Sigmoid colon (tissue), 7 donors: ENCODE measurements at regions of chr22 and their contacts with region 1.

Region 1: GRCh38 chr22:25777870-25778269 is 35.9 kb downstream of the MYO18B start:
- DNase-seq: no peak
- H3K4me3 ChIP-seq: no peak overlapping the region
- H3K27ac ChIP-seq: no peak overlapping the region
- H3K4me1 ChIP-seq: peaks cover 0 to 14% (median 14%) of the 10 kb centered on the region in 4 donors
- H3K27me3 ChIP-seq: no peaks in the 10 kb centered on the region
- CTCF ChIP-seq: no peak
- EP300 ChIP-seq: no peak
- POLR2A ChIP-seq: no peak

Region 2: DNA sequence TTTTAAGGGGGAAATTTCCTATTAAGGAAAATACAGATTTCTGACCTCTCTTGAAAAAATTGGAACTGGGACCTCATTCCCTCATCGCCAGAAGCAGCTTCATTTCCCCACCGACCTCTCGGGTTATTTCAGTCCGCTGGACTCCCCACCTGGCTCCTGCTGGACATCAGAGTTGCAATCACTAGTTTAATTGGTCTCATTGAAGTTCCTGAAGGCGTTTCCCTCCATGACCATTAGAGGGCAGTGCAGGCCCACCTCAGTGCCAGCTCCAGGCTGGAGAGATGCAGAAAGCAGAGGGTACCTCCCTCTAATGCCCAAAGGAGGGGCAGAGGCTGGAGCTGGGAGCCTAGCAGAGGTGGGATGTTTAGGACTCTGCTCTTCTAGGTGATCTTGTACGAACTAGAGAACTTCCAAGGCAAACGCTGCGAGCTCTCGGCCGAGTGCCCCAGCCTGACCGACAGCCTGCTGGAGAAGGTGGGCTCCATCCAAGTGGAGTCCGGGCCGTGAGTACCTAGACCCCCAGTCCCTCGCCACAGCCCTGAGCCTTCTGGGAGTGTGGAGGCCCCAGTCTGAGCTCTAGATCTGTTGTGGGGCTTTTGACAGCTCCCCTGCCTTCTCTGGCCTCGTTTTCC is 575.5 kb before region 1 on chr22:
- intact Hi-C with region 1: loop called (anchors 10 kb)
- DNase-seq: no peak
- H3K4me3 ChIP-seq: no peak overlapping the region
- H3K27ac ChIP-seq: no peak overlapping the region
- H3K4me1 ChIP-seq: no peaks in the 10 kb centered on the region
- H3K27me3 ChIP-seq: no peaks in the 10 kb centered on the region
- CTCF ChIP-seq: peak; percentile 9 to 91 (median 56)
- EP300 ChIP-seq: no peak
- POLR2A ChIP-seq: no peak

Region 3: GRCh38 chr22:25362215-25362882 is 415.5 kb before region 1 on chr22:
- intact Hi-C with region 1: loop called (anchors 5 kb)
- DNase-seq: peak; percentile 77
- H3K4me3 ChIP-seq: no peak overlapping the region
- H3K27ac ChIP-seq: no peak overlapping the region
- H3K4me1 ChIP-seq: peaks cover 0 to 15% (median 4%) of the 10 kb centered on the region in 4 donors
- H3K27me3 ChIP-seq: no peaks in the 10 kb centered on the region
- CTCF ChIP-seq: peak; percentile 49 to 87 (median 81)
- EP300 ChIP-seq: no peak
- POLR2A ChIP-seq: no peak

Region 4: GRCh38 chr22:25447686-25448434 is 330.0 kb before region 1 on chr22:
- intact Hi-C with region 1: loop called (anchors 5 kb)
- DNase-seq: peak; percentile 92
- H3K4me3 ChIP-seq: peak overlapping the region; percentile 50 to 82 (median 66)
- H3K27ac ChIP-seq: peak overlapping the region; percentile 72 to 83 (median 82)
- H3K4me1 ChIP-seq: peaks cover 0 to 31% (median 19%) of the 10 kb centered on the region in 4 donors
- H3K27me3 ChIP-seq: no peaks in the 10 kb centered on the region
- CTCF ChIP-seq: peak; percentile 85 to 94 (median 88)
- EP300 ChIP-seq: no peak
- POLR2A ChIP-seq: no peak

Region 5: DNA sequence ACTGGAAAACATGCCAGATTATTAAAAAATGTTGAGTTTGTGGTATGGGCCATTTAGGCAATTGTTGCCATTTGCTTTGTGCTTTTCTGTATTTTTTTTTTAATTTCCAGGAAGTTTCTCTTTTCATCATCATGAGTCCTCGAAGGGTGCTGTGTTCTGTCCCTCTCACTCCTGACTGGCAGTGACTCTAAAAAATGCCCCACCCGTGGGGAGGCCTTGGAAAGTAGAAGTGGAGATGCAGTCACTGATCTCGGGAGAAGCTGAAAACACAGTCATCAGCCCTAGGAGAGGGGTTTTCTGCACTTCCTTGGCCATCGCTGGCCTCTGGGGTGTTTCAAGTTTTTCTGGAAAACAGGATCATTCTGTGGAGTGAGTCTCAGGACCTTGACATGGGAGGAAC is 311.9 kb before region 1 on chr22:
- intact Hi-C with region 1: loop called (anchors 1 kb)
- DNase-seq: no peak
- H3K4me3 ChIP-seq: no peak overlapping the region
- H3K27ac ChIP-seq: no peak overlapping the region
- H3K4me1 ChIP-seq: no peaks in the 10 kb centered on the region
- H3K27me3 ChIP-seq: no peaks in the 10 kb centered on the region
- CTCF ChIP-seq: no peak
- EP300 ChIP-seq: no peak
- POLR2A ChIP-seq: no peak

Region 6: GRCh38 chr22:25564320-25564978 is 213.4 kb before region 1 on chr22 and contains the start of gene GRK3:
- intact Hi-C with region 1: loop called (anchors 10 kb)
- DNase-seq: peak; percentile 88
- H3K4me3 ChIP-seq: peak within 1 kb of the TSS; percentile 48 to 94 (median 90)
- H3K27ac ChIP-seq: peak within 1 kb of the TSS; percentile 66 to 83 (median 76)
- H3K4me1 ChIP-seq: peaks cover 0 to 39% (median 10%) of the 10 kb centered on the region in 4 donors
- H3K27me3 ChIP-seq: no peaks in the 10 kb centered on the region
- CTCF ChIP-seq: no peak
- EP300 ChIP-seq: no peak
- POLR2A ChIP-seq: no peak
- total RNA-seq, gene GRK3: 6.1 to 9.6 (median 8.3) TPM